ENCODE measurements at regions of chr7 and their contacts with region 1.

Region 1: DNA sequence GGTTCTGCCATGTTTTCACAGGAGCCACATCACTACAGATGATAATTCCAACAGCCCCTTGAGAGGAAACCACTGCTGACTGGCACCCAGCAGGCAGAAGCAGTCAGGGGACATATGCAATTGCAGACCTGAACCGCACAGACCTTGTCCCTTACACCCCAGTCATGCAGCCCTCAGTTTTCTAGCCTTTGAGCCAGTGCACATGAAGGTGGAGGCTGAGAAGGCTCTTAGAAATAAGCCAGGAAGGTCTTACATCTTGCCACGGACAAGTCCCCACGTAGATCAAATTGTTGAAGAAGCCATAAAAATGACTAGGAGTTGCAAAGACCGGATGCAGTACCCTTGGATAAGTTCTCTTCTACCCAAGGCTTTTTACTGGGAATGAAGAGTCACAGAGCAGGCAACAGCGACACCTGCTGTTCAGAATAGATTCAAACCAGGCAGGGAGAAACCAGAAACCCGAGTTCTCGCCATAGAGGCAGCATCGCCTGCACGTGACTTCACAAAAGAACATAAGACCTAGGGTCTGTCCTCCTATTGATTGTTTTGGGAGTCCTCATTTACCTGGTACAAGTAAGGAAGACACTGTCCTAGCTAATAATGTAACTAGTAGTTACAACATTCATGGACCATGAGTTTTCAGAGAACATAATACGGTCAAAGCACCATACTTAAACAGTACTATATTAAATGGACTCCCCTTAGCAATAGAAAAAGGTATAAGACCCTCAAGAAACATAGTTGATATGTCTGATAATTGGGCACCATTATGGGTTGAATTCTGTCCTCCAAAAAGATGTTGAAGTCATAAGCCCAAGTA is 11.1 kb downstream of the STEAP1B start:
- DNase-seq: peak; percentile 85
- H3K4me3 Mint-ChIP-seq: no peak overlapping the region
- H3K27ac Mint-ChIP-seq: no peak overlapping the region
- H3K4me1 Mint-ChIP-seq: peaks cover 22% of the 10 kb centered on the region
- H3K27me3 Mint-ChIP-seq: no peaks in the 10 kb centered on the region
- CTCF ChIP-seq: peak; percentile 97

Region 2: GRCh38 chr7:21526448-21526847 is 962.4 kb before region 1 on chr7:
- CTCF ChIA-PET with region 1: no interaction called
- intact Hi-C with region 1: no loop called
- DNase-seq: no peak
- H3K4me3 Mint-ChIP-seq: no peak overlapping the region
- H3K27ac Mint-ChIP-seq: no peak overlapping the region
- H3K4me1 Mint-ChIP-seq: no peaks in the 10 kb centered on the region
- H3K27me3 Mint-ChIP-seq: peaks cover 17% of the 10 kb centered on the region
- CTCF ChIP-seq: no peak

Region 3: GRCh38 chr7:22350466-22351328 is 138.2 kb before region 1 on chr7:
- CTCF ChIA-PET with region 1: no interaction called
- intact Hi-C with region 1: loop called (anchors 2 kb)
- DNase-seq: no peak
- H3K4me3 Mint-ChIP-seq: peak overlapping the region; percentile 64
- H3K27ac Mint-ChIP-seq: peak overlapping the region; percentile 84
- H3K4me1 Mint-ChIP-seq: peaks cover 75% of the 10 kb centered on the region
- H3K27me3 Mint-ChIP-seq: no peaks in the 10 kb centered on the region
- CTCF ChIP-seq: no peak

Measured in Calu3 (cell line).